ENCODE measurements at regions of chr7 and their contacts with region 1.

Region 1: DNA sequence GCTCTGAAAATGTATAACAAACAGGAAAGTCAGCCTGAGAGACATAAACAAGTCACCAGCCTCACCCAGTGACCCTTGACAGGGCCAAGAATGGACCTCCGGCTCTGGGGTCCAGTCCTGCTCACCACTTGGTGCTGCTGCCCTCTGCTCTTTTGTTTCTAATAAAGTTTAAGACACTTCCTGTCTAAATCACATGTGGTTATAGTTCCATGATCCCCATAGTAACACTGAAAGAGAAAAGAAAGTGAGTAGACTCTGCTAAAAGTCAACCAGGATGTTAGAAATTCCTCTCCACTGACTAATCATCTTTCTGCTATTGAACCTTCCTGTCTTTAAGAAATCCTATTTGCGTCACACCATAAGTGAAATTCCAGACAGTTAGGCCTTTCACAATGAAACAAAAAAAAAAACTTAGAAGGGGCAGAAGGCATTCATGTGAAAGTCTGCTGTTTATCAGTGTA is 179.2 kb upstream of the BET1 start:
- DNase-seq: peak; percentile 40 to 64
- H3K4me3 ChIP-seq: no peak overlapping the region
- H3K4me3 Mint-ChIP-seq: peak overlapping the region; percentile 52
- H3K27ac Mint-ChIP-seq: peak overlapping the region; percentile 97
- H3K4me1 ChIP-seq: peaks cover 25% of the 10 kb centered on the region
- H3K4me1 Mint-ChIP-seq: peaks cover 16% of the 10 kb centered on the region
- H3K27me3 ChIP-seq: no peaks in the 10 kb centered on the region
- H3K27me3 Mint-ChIP-seq: no peaks in the 10 kb centered on the region
- CTCF ChIP-seq: no peak

Region 2: GRCh38 chr7:94129443-94130140 is 53.7 kb before region 1 on chr7:
- CTCF ChIA-PET with region 1: no interaction called
- POLR2A ChIA-PET with region 1: no interaction called
- intact Hi-C with region 1: loop called (anchors 1 kb)
- DNase-seq: peak in 1 of 2 experiments; percentile 59
- H3K4me3 ChIP-seq: no peak overlapping the region
- H3K4me3 Mint-ChIP-seq: peak overlapping the region; percentile 24
- H3K27ac Mint-ChIP-seq: peak overlapping the region; percentile 50
- H3K4me1 ChIP-seq: peaks cover 24% of the 10 kb centered on the region
- H3K4me1 Mint-ChIP-seq: peaks cover 8% of the 10 kb centered on the region
- H3K27me3 ChIP-seq: no peaks in the 10 kb centered on the region
- H3K27me3 Mint-ChIP-seq: no peaks in the 10 kb centered on the region
- CTCF ChIP-seq: no peak

Measured in Caco-2 (cell line).